Activated T-helper 1 cell treated with anti-CD3 and anti-CD28 coated beads, Interleukin-12 subunit alpha, Interleukin-12 subunit beta, Interleukin-2, Interleukin-4 antibody, amounts not matched to agents 30 ng/mL and 10 ng/mL and 1 ng/mL, durations not matched to agents 14 hours and 24 hours and 36 hours (primary cell): ENCODE measurements at regions of chr1 and their contacts with region 1.

Region 1: GRCh38 chr1:34984793-34985608 is at the start of gene TMEM35B:
- DNase-seq: peak; percentile 81
- H3K4me3 Mint-ChIP-seq: peak within 1 kb of the TSS; percentile 91
- H3K27ac Mint-ChIP-seq: peak within 1 kb of the TSS; percentile 90
- H3K4me1 Mint-ChIP-seq: peaks cover 38% of the 10 kb centered on the region
- H3K27me3 Mint-ChIP-seq: no peaks in the 10 kb centered on the region
- total RNA-seq, gene TMEM35B: 22.1 and 22.6 TPM in 2 replicates

Region 2: GRCh38 chr1:33903210-33903589 is 1081.8 kb before region 1 on chr1:
- intact Hi-C with region 1: no loop called
- DNase-seq: no peak
- H3K4me3 Mint-ChIP-seq: no peak overlapping the region
- H3K27ac Mint-ChIP-seq: no peak overlapping the region
- H3K4me1 Mint-ChIP-seq: no peaks in the 10 kb centered on the region
- H3K27me3 Mint-ChIP-seq: peaks cover 14% of the 10 kb centered on the region

Region 3: GRCh38 chr1:34786521-34787325 is 198.3 kb before region 1 on chr1:
- intact Hi-C with region 1: loop called (anchors 1 kb)
- DNase-seq: peak; percentile 47
- H3K4me3 Mint-ChIP-seq: no peak overlapping the region
- H3K27ac Mint-ChIP-seq: no peak overlapping the region
- H3K4me1 Mint-ChIP-seq: peaks cover 25% of the 10 kb centered on the region
- H3K27me3 Mint-ChIP-seq: peaks cover 29% of the 10 kb centered on the region

Region 4: GRCh38 chr1:34844252-34844634 is 140.8 kb before region 1 on chr1:
- intact Hi-C with region 1: no loop called
- DNase-seq: no peak
- H3K4me3 Mint-ChIP-seq: no peak overlapping the region
- H3K27ac Mint-ChIP-seq: no peak overlapping the region
- H3K4me1 Mint-ChIP-seq: peaks cover 4% of the 10 kb centered on the region
- H3K27me3 Mint-ChIP-seq: no peaks in the 10 kb centered on the region

Region 5: DNA sequence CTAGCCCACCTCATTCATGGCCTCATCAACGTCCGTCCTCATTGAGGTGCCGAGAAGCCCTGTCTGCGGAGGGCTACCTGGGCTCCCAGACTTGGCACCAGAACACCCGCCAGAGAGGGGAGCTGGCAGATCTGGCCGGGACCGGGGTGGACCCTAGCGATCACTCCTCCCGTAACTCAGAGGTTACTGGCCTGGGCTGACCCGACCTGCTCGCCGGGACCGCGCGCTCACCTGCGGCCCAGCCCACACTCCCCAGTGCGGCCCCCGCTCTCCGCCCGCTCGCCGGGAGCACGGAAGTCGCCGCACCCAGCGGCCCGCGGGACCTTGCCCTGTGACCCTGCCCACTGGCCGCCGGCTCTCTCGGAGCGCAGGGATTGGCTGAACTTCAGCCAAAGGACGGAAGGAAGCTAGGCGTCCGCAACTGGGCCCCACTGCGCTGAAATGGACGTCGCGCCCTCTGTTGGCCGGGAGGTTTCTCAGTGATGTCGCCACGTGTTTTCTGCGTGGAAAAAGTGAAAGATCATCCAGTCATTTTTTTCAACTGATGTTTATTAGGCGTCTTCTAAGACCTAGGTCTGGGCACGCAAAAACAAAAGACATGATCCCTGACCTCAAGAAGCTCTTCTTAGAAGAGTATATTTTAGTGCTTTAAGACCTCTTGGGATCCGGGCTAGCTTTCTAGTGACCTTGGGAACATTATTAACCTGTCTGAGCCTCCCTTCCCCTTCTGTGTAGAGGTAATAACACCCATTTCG is 125.4 kb before region 1 on chr1 and contains the start of gene SMIM12:
- intact Hi-C with region 1: loop called (anchors 1 kb)
- DNase-seq: peak; percentile 90
- H3K4me3 Mint-ChIP-seq: peak within 1 kb of the TSS; percentile 98
- H3K27ac Mint-ChIP-seq: peak within 1 kb of the TSS; percentile 96
- H3K4me1 Mint-ChIP-seq: peaks cover 51% of the 10 kb centered on the region
- H3K27me3 Mint-ChIP-seq: peaks cover 4% of the 10 kb centered on the region
- total RNA-seq, gene SMIM12: 62.4 and 66.2 TPM in 2 replicates

Region 6: GRCh38 chr1:35030756-35031446 is 45.9 kb after region 1 on chr1:
- intact Hi-C with region 1: loop called (anchors 2 kb)
- DNase-seq: peak; percentile 27
- H3K4me3 Mint-ChIP-seq: peak overlapping the region; percentile 98
- H3K27ac Mint-ChIP-seq: peak overlapping the region; percentile 97
- H3K4me1 Mint-ChIP-seq: peaks cover 35% of the 10 kb centered on the region
- H3K27me3 Mint-ChIP-seq: no peaks in the 10 kb centered on the region

Region 7: DNA sequence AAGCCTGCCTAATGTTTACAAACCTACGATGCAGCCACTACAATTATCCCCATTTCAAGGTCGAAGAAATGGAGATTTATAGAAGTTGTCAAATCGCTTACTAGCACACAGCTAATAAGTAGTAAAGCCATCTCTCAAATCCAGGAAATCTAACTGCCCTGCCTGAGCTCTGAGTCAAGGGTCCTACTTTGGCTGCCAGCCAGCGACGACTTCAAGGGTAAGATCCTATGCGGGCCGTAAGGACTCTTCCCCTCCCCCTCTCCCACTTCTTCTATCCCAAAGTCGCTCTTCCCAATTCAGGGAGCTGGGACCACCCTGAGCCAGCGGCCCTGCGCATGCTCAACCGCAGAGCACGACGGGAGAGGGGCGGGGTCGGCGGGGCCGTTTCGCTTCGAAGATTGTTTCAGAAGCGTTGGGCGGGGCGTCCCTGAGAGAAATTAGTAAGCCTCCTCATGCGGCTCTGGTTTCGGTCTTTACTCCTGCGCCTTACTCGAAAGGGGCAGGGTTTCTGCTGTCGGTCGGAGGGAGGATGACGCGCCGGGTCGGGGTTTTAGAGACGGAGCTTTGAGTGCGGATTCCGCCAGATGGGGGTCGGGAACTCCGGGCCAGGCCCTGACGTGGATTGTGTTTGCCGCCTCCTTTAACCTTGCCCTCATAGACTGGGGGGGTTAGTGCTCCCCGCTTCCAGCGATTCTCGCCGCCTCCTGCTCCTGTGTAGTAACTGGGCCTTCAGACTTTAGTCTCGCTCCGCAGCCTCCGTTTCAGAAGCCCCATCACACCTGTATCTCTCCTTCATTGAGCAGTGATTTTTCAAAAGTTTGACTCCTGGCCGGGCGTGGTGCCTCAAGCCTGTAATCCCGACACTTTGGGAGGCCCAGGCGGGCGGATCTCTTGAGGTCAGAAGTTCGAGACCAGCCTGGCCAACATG is 94.3 kb after region 1 on chr1 and contains the start of gene ZMYM1:
- intact Hi-C with region 1: loop called (anchors 2 kb)
- DNase-seq: peak; percentile 82
- H3K4me3 Mint-ChIP-seq: peak within 1 kb of the TSS; percentile 98
- H3K27ac Mint-ChIP-seq: peak within 1 kb of the TSS; percentile 100
- H3K4me1 Mint-ChIP-seq: peaks cover 34% of the 10 kb centered on the region
- H3K27me3 Mint-ChIP-seq: no peaks in the 10 kb centered on the region
- total RNA-seq, gene ZMYM1: 3.3 and 5.3 TPM in 2 replicates

Region 8: DNA sequence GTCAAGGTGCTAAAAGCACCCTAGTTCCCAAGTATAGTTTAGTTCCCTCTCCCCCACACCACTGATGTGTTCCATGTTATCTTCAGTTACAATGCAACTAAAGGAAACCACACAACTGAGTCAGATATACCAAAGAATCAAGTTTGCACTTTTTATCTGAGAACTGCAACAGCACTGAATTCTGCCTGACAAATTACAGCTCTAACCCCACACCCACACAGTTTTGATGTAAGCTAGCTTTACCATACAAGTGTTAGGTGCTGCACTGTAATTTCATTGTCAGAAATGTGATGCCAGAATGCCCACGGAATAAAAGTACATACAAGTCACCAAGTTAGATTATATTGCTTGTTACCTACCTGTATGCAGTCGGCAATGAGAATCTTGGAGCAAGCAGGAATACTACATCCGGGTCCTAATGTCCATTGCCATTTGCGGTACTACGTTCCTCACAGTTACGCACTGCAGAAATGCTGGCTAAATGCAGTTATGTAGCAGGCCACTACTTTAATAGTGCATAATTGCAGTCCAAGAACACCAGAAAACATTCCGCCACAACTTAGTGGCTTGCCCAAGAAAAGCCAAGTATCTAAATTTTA is 195.9 kb after region 1 on chr1:
- intact Hi-C with region 1: loop called (anchors 5 kb)
- DNase-seq: no peak
- H3K4me3 Mint-ChIP-seq: peak overlapping the region; percentile 6
- H3K27ac Mint-ChIP-seq: peak overlapping the region; percentile 61
- H3K4me1 Mint-ChIP-seq: peaks cover 68% of the 10 kb centered on the region
- H3K27me3 Mint-ChIP-seq: no peaks in the 10 kb centered on the region